ENCODE measurements at regions of chr7 and their contacts with region 1.

Region 1: GRCh38 chr7:35424869-35425495 is 171.1 kb upstream of the TBX20 start:
- DNase-seq: peak; percentile 67
- ATAC-seq: peak; percentile 64 to 78

Region 2: GRCh38 chr7:35261476-35262285 is 163.3 kb before region 1 on chr7:
- intact Hi-C with region 1: loop called in 1 of 2 experiments (anchors 5 kb)
- DNase-seq: peak; percentile 33
- ATAC-seq: peak; percentile 23 to 33

Region 3: GRCh38 chr7:35313575-35313974 is 111.4 kb before region 1 on chr7:
- intact Hi-C with region 1: no loop called
- DNase-seq: no peak
- ATAC-seq: peak; percentile 56 to 74

Region 4: GRCh38 chr7:35519971-35520809 is 95.2 kb after region 1 on chr7:
- intact Hi-C with region 1: loop called (anchors 2 to 10 kb)
- DNase-seq: peak; percentile 89
- ATAC-seq: peak; percentile 93 to 94

Region 5: DNA sequence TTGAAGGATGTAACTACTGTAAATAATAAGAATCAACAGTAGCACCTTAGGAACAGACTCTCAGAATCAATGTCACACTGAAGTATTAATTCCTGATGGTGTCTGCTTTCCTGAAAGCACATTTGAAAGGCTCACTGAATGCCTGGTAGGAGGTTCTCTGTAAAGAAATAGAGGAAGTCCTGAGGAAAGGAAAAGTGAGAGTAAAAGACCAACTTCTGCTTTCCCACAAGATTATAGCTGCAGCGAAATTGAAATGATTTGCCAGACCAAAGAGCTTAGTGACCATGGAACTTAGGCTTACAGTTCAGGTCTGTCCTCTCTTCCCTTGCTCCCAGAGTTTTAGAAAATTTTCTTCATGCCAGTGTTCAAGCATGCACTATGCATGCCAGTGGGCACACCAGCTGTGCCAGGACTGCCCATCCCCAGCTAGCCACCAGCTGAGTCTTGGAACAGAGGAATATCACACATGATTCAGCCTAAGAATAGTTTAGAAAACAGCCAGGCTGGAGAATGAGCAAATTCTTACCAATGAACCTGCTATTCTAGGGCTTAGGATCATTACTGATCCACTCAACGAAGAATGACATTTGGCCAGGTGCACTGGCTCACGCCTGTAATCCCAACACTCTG is 146.7 kb after region 1 on chr7:
- intact Hi-C with region 1: no loop called
- DNase-seq: no peak
- ATAC-seq: peak in 1 of 2 donors; percentile 52

Region 6: GRCh38 chr7:35624299-35625186 is 199.6 kb after region 1 on chr7:
- intact Hi-C with region 1: loop called in 1 of 2 experiments (anchors 10 kb)
- DNase-seq: no peak
- ATAC-seq: peak; percentile 79 to 84

Region 7: DNA sequence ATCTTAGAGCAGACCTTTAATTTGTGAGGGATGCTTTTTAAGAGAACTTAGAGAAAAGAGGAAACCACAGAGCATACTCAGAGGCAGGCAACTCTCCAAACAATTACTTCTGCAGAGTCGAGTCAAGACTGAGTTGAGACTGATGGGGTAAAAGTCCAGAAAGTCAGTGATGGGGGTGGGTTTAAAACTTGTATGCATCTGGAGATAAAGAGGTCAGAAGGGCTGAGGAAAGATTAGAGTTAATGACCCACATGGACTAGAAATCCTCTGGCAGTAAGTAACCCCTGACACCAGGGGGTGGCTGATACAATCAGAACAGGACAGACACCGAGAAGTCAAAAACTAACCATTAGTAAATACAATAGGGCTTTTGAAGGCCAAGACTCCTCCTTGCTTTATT is 333.4 kb after region 1 on chr7:
- intact Hi-C with region 1: no loop called
- DNase-seq: no peak
- ATAC-seq: no peak

Measured in left cardiac atrium (tissue), 4 donors.